ENCODE measurements at regions of chr12 and their contacts with region 1.

Region 1: GRCh38 chr12:103705927-103706326 is 118.9 kb downstream of the STAB2 start:
- DNase-seq: no peak
- ATAC-seq: no peak
- H3K4me3 ChIP-seq: no peak overlapping the region
- H3K27ac ChIP-seq: no peak overlapping the region
- H3K4me1 ChIP-seq: no peaks in the 10 kb centered on the region
- H3K27me3 ChIP-seq: peaks cover 0 to 7% (median 4%) of the 10 kb centered on the region in 3 donors
- CTCF ChIP-seq: no peak

Region 2: GRCh38 chr12:103652797-103653196 is 53.1 kb before region 1 on chr12:
- intact Hi-C with region 1: loop called in 1 of 2 experiments (anchors 2 kb)
- DNase-seq: no peak
- ATAC-seq: no peak
- H3K4me3 ChIP-seq: no peak overlapping the region
- H3K27ac ChIP-seq: no peak overlapping the region
- H3K4me1 ChIP-seq: no peaks in the 10 kb centered on the region
- H3K27me3 ChIP-seq: no peaks in the 10 kb centered on the region
- CTCF ChIP-seq: no peak

Region 3: DNA sequence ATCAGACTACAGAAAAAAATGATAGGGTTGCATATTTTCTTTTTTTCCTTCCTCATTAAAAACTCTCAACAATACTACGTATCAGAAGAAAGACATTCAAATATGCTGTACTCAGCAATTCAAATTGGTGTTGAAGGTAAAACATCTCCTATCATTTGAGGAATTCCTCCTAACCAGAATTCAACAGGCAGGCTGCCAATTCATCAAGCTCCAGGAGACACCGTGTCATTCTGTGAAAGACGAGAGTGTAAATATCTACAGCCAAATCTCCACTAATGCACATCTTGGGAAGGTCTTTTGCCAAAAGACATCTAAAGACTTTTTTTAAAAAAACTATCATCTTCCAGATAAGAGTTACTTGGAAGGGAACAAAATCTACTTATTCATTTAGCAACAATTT is 108.5 kb after region 1 on chr12:
- intact Hi-C with region 1: no loop called
- DNase-seq: no peak
- ATAC-seq: no peak
- H3K4me3 ChIP-seq: no peak overlapping the region
- H3K27ac ChIP-seq: peak overlapping the region; percentile 33
- H3K4me1 ChIP-seq: peaks cover 17% of the 10 kb centered on the region
- H3K27me3 ChIP-seq: no peaks in the 10 kb centered on the region
- CTCF ChIP-seq: no peak

Measured in psoas muscle (tissue), 8 donors.